Right ventricle myocardium inferior (tissue), 1 donor: ENCODE measurements at regions of chr5 and their contacts with region 1.

Region 1: GRCh38 chr5:132419502-132420468 is 50.3 kb downstream of the SLC22A5 start:
- DNase-seq: peak; percentile 83
- ATAC-seq: peak; percentile 56

Region 2: DNA sequence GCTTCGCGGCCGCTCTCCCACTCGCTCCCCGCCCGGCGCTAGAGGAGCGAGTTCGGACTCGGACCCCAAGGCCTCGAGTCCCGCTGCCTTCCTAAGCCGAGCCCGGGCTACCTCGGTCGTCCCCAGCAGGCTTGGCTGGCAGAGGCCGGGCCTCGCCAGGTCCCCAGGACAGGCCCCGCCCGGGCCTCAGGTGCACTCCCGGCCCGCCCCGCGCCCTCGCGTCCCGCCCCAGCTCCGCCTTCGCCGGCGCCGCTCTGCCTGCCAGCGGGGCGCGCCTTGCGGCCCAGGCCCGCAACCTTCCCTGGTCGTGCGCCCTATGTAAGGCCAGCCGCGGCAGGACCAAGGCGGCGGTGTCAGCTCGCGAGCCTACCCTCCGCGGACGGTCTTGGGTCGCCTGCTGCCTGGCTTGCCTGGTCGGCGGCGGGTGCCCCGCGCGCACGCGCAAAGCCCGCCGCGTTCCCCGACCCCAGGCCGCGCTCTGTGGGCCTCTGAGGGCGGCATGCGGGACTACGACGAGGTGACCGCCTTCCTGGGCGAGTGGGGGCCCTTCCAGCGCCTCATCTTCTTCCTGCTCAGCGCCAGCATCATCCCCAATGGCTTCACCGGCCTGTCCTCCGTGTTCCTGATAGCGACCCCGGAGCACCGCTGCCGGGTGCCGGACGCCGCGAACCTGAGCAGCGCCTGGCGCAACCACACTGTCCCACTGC is 50.2 kb before region 1 on chr5 and contains the start of gene SLC22A5:
- intact Hi-C with region 1: no loop called
- DNase-seq: peak; percentile 86
- ATAC-seq: peak; percentile 86
- total RNA-seq, gene SLC22A5: 22.3 TPM

Region 3: GRCh38 chr5:132490486-132491367 is 70.9 kb after region 1 on chr5 and contains the start of gene IRF1:
- intact Hi-C with region 1: loop called (anchors 1 kb)
- DNase-seq: peak; percentile 97
- ATAC-seq: peak; percentile 93
- total RNA-seq, gene IRF1: 12.7 TPM